ENCODE measurements at regions of chrX and their contacts with region 1.

Region 1: GRCh38 chrX:151396042-151396824 is 773 bp upstream of the VMA21 start:
- DNase-seq: peak in 31 of 35 experiments; percentile 5 to 57 (median 27)
- ATAC-seq: peak; percentile 20 to 28 (median 26)
- H3K4me3 ChIP-seq: peak overlapping the region; percentile 66 to 67
- H3K4me3 Mint-ChIP-seq: peak overlapping the region; percentile 69 to 85 (median 84)
- H3K27ac ChIP-seq: peak overlapping the region; percentile 97
- H3K27ac Mint-ChIP-seq: peak overlapping the region; percentile 94 to 97
- H3K4me1 ChIP-seq: peaks cover 23 to 54% of the 10 kb centered on the region in 2 experiments
- H3K4me1 Mint-ChIP-seq: peaks cover 43 to 68% (median 63%) of the 10 kb centered on the region in 3 donors
- H3K27me3 ChIP-seq: no peaks in the 10 kb centered on the region
- H3K27me3 Mint-ChIP-seq: no peaks in the 10 kb centered on the region

Region 2: GRCh38 chrX:151363316-151363715 is 32.9 kb before region 1 on chrX:
- CTCF ChIA-PET with region 1: interaction called, 3 to 14 read pairs
- POLR2A ChIA-PET with region 1: no interaction called
- DNase-seq: no peak
- ATAC-seq: no peak
- H3K4me3 ChIP-seq: no peak overlapping the region
- H3K4me3 Mint-ChIP-seq: no peak overlapping the region
- H3K27ac ChIP-seq: no peak overlapping the region
- H3K27ac Mint-ChIP-seq: no peak overlapping the region
- H3K4me1 ChIP-seq: peaks cover 0 to 4% of the 10 kb centered on the region in 2 experiments
- H3K4me1 Mint-ChIP-seq: peaks cover 0 to 3% (median 3%) of the 10 kb centered on the region in 3 donors
- H3K27me3 ChIP-seq: peaks cover 4 to 12% of the 10 kb centered on the region in 2 experiments
- H3K27me3 Mint-ChIP-seq: peaks cover 8 to 32% of the 10 kb centered on the region in 2 donors